HepG2 (cell line): ENCODE measurements at regions of chr4 and their contacts with region 1.

Region 1: GRCh38 chr4:112523764-112524505 is 8.0 kb upstream of the NEUROG2 start:
- DNase-seq: peak; percentile 66
- ATAC-seq: peak; percentile 97
- H3K4me3 ChIP-seq: peak overlapping the region; percentile 23 to 54 (median 43); a peak in 4 of 6 replicates
- H3K27ac ChIP-seq: no peak overlapping the region
- H3K4me1 ChIP-seq: peaks cover 27% of the 10 kb centered on the region
- H3K27me3 ChIP-seq: peaks cover 0 to 47% of the 10 kb centered on the region in 2 experiments
- CTCF ChIP-seq: peak; percentile 95
- EP300 ChIP-seq: no peak
- POLR2A ChIP-seq: no peak
- RAD21 ChIP-seq: peak; percentile 93

Region 2: DNA sequence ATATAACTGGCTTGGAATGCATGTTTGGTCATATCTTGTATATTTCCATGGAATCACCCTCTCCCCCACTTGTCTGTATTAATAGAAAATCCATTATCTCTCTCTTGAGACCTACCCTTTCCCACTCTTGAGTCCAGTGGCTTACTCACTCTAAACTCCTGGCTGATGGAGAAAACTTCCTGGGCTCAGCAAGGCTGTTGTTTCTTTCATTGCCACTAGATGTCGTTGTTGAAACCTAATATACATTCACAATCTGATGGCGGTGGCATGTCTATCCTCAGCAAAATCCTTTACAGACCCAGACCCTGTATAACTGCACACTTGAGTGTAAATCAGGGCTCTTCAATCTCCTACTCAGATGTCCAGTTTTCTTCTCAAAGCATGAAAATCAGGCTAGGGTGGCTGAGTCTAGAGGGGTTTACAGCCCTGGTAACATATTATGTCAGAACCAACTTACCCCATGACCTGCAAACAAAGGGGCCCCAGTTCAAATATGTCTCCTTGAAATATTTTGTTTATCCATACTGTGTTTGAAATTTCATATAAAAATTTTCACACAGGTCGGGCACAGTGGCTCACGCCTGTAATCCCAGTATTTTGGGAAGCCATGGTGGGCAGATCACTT is 448.7 kb before region 1 on chr4:
- CTCF ChIA-PET with region 1: interaction called, 6 read pairs
- POLR2A ChIA-PET with region 1: no interaction called
- in situ Hi-C with region 1: loop called (anchors 10 kb)
- intact Hi-C with region 1: loop called (anchors 1 kb)
- DNase-seq: peak; percentile 57
- ATAC-seq: peak; percentile 87
- H3K4me3 ChIP-seq: no peak overlapping the region
- H3K27ac ChIP-seq: no peak overlapping the region
- H3K4me1 ChIP-seq: no peaks in the 10 kb centered on the region
- H3K27me3 ChIP-seq: no peaks in the 10 kb centered on the region
- CTCF ChIP-seq: peak; percentile 77
- EP300 ChIP-seq: no peak
- POLR2A ChIP-seq: no peak
- RAD21 ChIP-seq: no peak

Region 3: GRCh38 chr4:112327965-112328733 is 195.8 kb before region 1 on chr4:
- CTCF ChIA-PET with region 1: interaction called, 27 read pairs
- POLR2A ChIA-PET with region 1: no interaction called
- in situ Hi-C with region 1: loop called (anchors 5 kb)
- intact Hi-C with region 1: loop called (anchors 1 kb)
- DNase-seq: peak; percentile 38
- ATAC-seq: peak; percentile 37; the same call in 1 of the 3 replicates
- H3K4me3 ChIP-seq: no peak overlapping the region
- H3K27ac ChIP-seq: no peak overlapping the region
- H3K4me1 ChIP-seq: no peaks in the 10 kb centered on the region
- H3K27me3 ChIP-seq: no peaks in the 10 kb centered on the region
- CTCF ChIP-seq: peak; percentile 61
- EP300 ChIP-seq: no peak
- POLR2A ChIP-seq: no peak
- RAD21 ChIP-seq: peak; percentile 50; the same call in 1 of the 2 replicates

Region 4: DNA sequence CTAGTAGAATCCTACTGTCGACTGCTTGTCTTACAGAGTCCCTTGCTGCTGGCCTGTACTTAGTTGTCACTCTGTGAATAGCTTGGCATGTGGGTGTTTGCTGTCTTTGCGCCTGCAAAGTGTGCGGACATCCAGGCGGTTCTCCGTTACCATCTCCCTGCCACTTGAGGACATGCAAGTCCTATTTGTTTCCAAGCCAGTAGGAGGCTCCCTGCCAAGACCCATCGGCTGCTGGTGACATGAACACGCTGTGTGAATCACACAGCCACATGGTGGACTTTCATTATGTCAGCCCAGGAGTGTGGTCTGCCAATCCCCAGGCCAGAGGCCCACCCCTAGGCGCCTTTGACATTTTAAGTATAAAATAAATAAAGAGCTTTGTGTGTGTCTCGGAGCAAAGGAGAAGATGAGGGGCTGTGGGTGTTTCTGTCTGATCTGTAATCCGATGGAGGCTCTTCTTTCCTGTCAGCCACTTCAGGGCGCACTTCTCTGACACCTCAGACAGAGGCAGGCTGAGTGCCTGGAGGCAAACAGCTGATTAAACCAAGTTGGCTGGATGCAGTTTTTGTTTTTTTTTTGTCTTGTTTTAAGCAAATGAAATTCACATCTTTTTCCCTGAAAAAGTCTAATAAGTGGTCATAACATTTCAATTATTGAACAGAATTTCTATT is 175.3 kb before region 1 on chr4:
- CTCF ChIA-PET with region 1: no interaction called
- POLR2A ChIA-PET with region 1: no interaction called
- in situ Hi-C with region 1: no loop called
- intact Hi-C with region 1: loop called (anchors 1 kb)
- DNase-seq: peak; percentile 65
- ATAC-seq: peak; percentile 100
- H3K4me3 ChIP-seq: no peak overlapping the region; a peak in 1 of 6 replicates
- H3K27ac ChIP-seq: no peak overlapping the region
- H3K4me1 ChIP-seq: no peaks in the 10 kb centered on the region
- H3K27me3 ChIP-seq: no peaks in the 10 kb centered on the region
- CTCF ChIP-seq: peak; percentile 67
- EP300 ChIP-seq: no peak
- POLR2A ChIP-seq: no peak
- RAD21 ChIP-seq: peak; percentile 41; the same call in 1 of the 2 replicates

Region 5: DNA sequence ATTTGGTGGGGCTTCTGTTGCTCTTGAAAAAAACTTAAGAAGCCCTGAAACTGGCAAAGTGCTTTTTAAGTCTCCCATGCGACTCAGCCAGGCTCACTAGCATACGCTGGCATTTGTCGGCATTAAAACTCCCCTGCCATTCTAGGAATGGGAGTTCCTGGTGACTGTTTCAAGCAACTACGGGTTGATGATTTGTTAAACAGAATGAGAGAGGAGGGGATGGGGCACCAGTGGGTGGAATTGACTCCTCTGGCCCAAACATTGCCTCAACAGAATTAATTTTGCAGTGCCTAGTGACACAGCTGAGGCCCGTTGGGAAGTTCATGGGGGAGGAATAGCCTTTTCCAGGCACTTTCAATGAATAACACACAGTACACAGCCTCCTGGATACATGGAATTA is 38.0 kb before region 1 on chr4:
- CTCF ChIA-PET with region 1: no interaction called
- POLR2A ChIA-PET with region 1: no interaction called
- in situ Hi-C with region 1: no loop called
- intact Hi-C with region 1: no loop called
- DNase-seq: no peak
- ATAC-seq: no peak
- H3K4me3 ChIP-seq: no peak overlapping the region
- H3K27ac ChIP-seq: no peak overlapping the region
- H3K4me1 ChIP-seq: no peaks in the 10 kb centered on the region
- H3K27me3 ChIP-seq: peaks cover 0 to 5% of the 10 kb centered on the region in 2 experiments; a peak in 1 of 5 replicates
- CTCF ChIP-seq: no peak
- EP300 ChIP-seq: no peak
- POLR2A ChIP-seq: no peak
- RAD21 ChIP-seq: no peak

Region 6: DNA sequence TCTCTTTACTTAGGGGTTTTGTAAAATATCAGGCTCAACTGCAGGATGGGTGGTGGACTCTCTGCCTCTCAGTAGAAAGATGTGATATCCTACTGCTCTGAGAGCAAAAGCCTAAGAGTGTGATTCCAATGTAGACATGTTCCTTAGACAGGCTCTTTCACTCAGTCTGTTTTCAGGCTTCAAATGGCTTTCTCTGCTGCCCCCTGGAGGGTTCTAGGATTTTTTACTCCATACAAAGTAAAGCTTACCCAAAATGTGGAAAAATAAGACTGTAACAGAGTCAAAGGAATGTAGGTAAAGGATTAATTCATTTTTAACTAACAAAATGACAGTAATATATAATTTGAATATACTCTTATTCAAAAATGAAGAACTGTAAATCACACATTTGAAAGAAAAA is 80.7 kb after region 1 on chr4:
- CTCF ChIA-PET with region 1: no interaction called
- POLR2A ChIA-PET with region 1: no interaction called
- in situ Hi-C with region 1: no loop called
- intact Hi-C with region 1: loop called (anchors 5 kb)
- DNase-seq: peak; percentile 39
- ATAC-seq: peak; percentile 88
- H3K4me3 ChIP-seq: no peak overlapping the region
- H3K27ac ChIP-seq: no peak overlapping the region
- H3K4me1 ChIP-seq: no peaks in the 10 kb centered on the region
- H3K27me3 ChIP-seq: no peaks in the 10 kb centered on the region
- CTCF ChIP-seq: peak; percentile 60
- EP300 ChIP-seq: no peak
- POLR2A ChIP-seq: no peak
- RAD21 ChIP-seq: no peak; the same call in 1 of the 2 replicates

Region 7: DNA sequence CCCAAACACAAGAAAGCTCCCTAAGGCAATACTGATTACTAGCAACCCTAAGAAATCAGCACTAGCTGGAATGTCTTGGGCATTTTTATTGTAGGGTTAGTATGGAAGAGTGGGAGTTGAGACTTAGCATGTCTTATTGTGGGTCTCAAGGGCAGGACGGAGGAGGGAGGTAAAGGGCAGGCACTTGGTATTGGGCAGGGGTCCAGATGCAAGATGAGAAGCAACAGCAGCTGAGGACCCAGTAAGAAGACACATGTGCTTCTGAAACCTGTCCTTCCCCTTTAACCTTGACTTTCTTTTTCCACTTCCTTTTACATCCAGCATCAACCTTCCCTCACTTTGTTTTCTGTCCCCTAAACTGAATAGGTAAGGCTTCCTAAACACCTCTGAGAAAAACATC is 150.4 kb after region 1 on chr4:
- CTCF ChIA-PET with region 1: no interaction called
- POLR2A ChIA-PET with region 1: no interaction called
- in situ Hi-C with region 1: no loop called
- intact Hi-C with region 1: no loop called
- DNase-seq: no peak
- ATAC-seq: no peak
- H3K4me3 ChIP-seq: no peak overlapping the region
- H3K27ac ChIP-seq: no peak overlapping the region
- H3K4me1 ChIP-seq: peaks cover 9% of the 10 kb centered on the region
- H3K27me3 ChIP-seq: no peaks in the 10 kb centered on the region; a peak in 1 of 5 replicates
- CTCF ChIP-seq: no peak
- EP300 ChIP-seq: no peak
- POLR2A ChIP-seq: no peak
- RAD21 ChIP-seq: no peak